H1 (cell line): ENCODE measurements at regions of chr17 and their contacts with region 1.

Region 1: GRCh38 chr17:58303971-58304725 is 23.4 kb upstream of the MPO start:
- DNase-seq: peak; percentile 41 to 84
- H3K4me3 ChIP-seq: no peak overlapping the region
- H3K27ac ChIP-seq: peak overlapping the region; percentile 16; the same call in 1 of the 2 replicates
- H3K4me1 ChIP-seq: peaks cover 0 to 15% (median 10%) of the 10 kb centered on the region in 4 experiments; a peak in 5 of 7 replicates
- H3K27me3 ChIP-seq: no peaks in the 10 kb centered on the region
- CTCF ChIP-seq: peak; percentile 82 to 97 (median 93)
- EP300 ChIP-seq: no peak
- POLR2A ChIP-seq: no peak
- RAD21 ChIP-seq: peak; percentile 55 to 64

Region 2: DNA sequence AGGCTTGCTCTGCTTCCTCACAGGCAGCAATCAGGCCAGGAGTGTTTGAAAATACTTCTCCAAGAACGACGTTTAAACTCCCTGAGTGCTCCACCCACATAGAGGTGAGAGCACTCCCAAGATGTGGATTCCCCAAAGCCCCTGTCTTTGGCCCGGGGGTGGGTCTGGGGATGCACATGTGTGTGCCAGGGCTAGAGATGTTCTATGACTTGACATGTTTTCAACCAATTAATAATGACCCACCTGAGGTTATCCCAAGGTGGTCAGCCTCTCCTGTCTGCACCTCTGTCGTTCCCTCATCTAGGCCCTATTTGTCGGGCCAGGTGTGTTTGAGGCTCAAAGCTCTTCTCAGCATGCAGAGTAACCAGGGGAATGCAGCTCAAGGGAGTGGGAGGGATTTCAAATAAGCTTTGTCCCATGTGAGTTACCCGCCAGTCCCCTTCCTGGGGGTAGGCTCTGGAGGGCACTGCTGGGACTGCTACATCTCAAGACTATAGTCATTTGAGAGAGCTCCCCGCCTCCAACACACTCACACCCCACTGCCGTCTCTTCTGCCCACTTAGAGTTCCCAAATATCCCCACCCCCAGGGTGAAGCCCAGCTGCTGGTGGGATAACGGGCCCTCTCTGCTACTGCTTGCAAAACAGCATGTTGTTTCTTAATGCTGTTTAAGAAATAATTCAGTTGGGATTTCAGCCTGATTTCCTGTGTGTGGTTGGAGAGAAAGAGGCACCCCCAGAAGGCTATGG is 19.7 kb before region 1 on chr17:
- CTCF ChIA-PET with region 1: interaction called, 75 read pairs
- POLR2A ChIA-PET with region 1: interaction called, 9 read pairs
- DNase-seq: peak; percentile 23 to 62
- H3K4me3 ChIP-seq: peak overlapping the region in 1 of 4 experiments; percentile 0; a peak in 1 of 8 replicates
- H3K27ac ChIP-seq: no peak overlapping the region
- H3K4me1 ChIP-seq: peaks cover 0 to 8% (median 4%) of the 10 kb centered on the region in 4 experiments; a peak in 5 of 7 replicates
- H3K27me3 ChIP-seq: peaks cover 0 to 2% (median 0%) of the 10 kb centered on the region in 4 experiments; a peak in 2 of 7 replicates
- CTCF ChIP-seq: peak in 1 of 3 experiments; percentile 8; a peak in 2 of 4 replicates
- EP300 ChIP-seq: no peak
- POLR2A ChIP-seq: peak in 1 of 2 experiments; percentile 68; a peak in 2 of 3 replicates
- RAD21 ChIP-seq: peak in 1 of 2 experiments; percentile 2; a peak in 1 of 4 replicates

Region 3: DNA sequence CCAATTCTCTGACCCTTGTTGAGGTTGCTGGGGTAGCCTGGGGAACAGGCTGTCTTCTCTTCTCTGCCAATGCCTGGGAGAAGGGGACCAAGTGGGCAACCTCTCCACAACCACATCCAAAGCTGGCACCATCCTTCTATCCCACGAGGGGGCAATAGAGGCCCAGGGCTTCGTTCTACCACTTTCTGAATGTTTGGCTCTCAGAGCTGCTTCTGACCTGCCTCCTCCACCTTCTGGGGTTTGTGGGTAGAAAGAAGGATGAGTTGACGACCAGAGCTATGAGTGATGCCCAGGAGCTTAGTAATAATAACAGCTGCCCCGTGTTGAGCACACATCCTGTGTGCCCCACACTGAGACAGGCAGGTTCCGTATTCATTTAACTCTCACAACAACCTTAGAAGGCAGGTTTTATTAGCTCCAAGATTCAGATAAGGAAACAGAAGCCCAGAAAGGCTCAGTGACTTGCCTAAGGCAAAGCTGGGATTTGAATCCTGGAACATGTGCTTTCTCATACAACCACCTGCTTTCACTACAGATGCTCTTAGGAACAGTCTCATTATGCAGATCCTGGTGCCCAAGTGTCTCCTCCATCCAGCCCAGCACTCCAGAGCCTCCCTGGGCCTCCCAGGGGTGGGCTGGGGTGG is 13.4 kb after region 1 on chr17:
- CTCF ChIA-PET with region 1: interaction called, 172 read pairs
- POLR2A ChIA-PET with region 1: interaction called, 11 read pairs
- DNase-seq: peak in 1 of 2 experiments; percentile 62
- H3K4me3 ChIP-seq: no peak overlapping the region
- H3K27ac ChIP-seq: no peak overlapping the region
- H3K4me1 ChIP-seq: no peaks in the 10 kb centered on the region; a peak in 1 of 7 replicates
- H3K27me3 ChIP-seq: no peaks in the 10 kb centered on the region; a peak in 2 of 7 replicates
- CTCF ChIP-seq: peak; percentile 71 to 87 (median 83)
- EP300 ChIP-seq: no peak
- POLR2A ChIP-seq: no peak
- RAD21 ChIP-seq: peak; percentile 94

Region 4: GRCh38 chr17:58344047-58344790 is 40.1 kb after region 1 on chr17:
- CTCF ChIA-PET with region 1: interaction called, 384 read pairs
- POLR2A ChIA-PET with region 1: interaction called, 6 read pairs
- DNase-seq: no peak
- H3K4me3 ChIP-seq: no peak overlapping the region
- H3K27ac ChIP-seq: no peak overlapping the region
- H3K4me1 ChIP-seq: peaks cover 0 to 5% (median 2%) of the 10 kb centered on the region in 4 experiments; a peak in 4 of 7 replicates
- H3K27me3 ChIP-seq: no peaks in the 10 kb centered on the region
- CTCF ChIP-seq: no peak
- EP300 ChIP-seq: no peak
- POLR2A ChIP-seq: peak in 1 of 2 experiments; percentile 39; a peak in 1 of 3 replicates
- RAD21 ChIP-seq: no peak

Region 5: DNA sequence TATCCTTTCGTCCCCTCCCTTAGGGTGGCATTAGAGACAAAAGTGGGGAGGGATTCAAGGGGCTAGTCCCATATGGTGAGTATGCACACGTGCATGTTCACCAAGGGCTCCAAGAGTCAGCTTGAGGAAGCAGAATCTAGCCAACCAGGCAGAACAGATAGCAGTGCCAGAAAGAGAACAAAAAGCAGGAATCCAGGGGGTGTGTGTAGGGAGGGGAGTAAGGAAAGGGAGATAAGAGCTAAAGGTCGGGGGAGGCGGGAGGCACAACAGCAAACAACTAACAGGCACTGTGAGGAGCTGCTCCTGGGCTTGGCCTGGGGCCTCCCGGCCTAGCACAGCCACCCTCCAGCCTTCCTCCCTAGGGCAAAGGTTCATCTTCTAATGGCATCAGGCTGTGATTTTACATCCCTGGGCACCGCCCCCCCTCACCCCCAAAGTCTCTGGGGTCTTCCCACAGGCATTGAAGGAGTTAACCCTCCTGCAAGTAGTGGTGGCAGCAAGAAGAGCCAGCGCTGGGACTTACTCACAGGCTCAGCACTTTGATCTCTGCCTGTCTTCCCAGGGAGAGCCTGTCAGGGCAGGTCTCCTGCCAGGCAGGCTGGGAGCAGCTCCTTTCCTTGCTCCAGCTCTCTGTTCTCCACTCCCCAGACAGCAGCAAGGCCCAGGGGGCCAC is 60.3 kb after region 1 on chr17:
- CTCF ChIA-PET with region 1: interaction called, 13 read pairs
- POLR2A ChIA-PET with region 1: no interaction called
- DNase-seq: no peak
- H3K4me3 ChIP-seq: no peak overlapping the region
- H3K27ac ChIP-seq: no peak overlapping the region
- H3K4me1 ChIP-seq: peaks cover 0 to 2% (median 0%) of the 10 kb centered on the region in 4 experiments; a peak in 1 of 7 replicates
- H3K27me3 ChIP-seq: no peaks in the 10 kb centered on the region
- CTCF ChIP-seq: no peak
- EP300 ChIP-seq: no peak
- POLR2A ChIP-seq: no peak
- RAD21 ChIP-seq: no peak

Region 6: DNA sequence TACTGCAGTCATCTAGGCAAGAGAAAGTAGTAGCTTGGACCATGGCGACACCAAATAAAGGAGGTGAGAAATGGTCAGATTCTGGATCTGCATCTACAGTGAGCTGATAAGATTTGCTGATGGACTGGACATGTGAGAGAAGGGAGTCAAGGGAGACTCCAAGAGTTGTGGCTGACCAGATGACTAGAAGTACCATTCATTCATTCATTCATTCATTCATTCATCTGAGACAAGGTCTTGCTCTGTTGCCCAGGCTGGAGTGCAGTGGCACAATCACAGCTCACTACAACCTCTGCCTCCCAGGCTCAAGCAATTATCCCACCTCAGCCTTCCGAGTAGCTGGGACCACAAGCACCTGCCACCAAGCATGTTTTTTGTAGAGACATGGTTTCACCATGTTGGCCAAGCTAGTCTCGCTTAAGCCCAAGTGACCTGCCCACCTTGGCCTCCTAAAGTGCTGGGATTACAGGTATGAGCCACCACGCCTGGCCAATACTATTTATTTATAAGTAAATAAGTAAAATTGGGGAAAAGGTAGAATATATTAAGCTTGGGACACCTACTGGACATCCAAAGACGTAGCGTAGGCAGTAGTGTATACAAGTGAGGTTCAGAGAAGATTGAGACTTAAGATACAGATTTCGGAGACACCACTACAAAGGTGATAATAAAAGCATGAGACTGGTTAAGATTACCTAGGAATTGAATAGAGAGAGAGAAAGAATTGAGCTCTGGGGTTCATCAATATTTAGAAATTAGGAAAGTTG is 128.8 kb after region 1 on chr17:
- CTCF ChIA-PET with region 1: interaction called, 12 read pairs
- POLR2A ChIA-PET with region 1: no interaction called
- DNase-seq: no peak
- H3K4me3 ChIP-seq: no peak overlapping the region
- H3K27ac ChIP-seq: no peak overlapping the region
- H3K4me1 ChIP-seq: no peaks in the 10 kb centered on the region
- H3K27me3 ChIP-seq: peaks cover 0 to 2% (median 0%) of the 10 kb centered on the region in 4 experiments; a peak in 1 of 7 replicates
- CTCF ChIP-seq: no peak
- EP300 ChIP-seq: no peak
- POLR2A ChIP-seq: no peak
- RAD21 ChIP-seq: no peak